PC-9 (cell line): ENCODE measurements at regions of chr6 and their contacts with region 1.

Region 1: GRCh38 chr6:151179321-151179720 is 60.4 kb upstream of the AKAP12 start:
- DNase-seq: no peak
- H3K4me3 ChIP-seq: no peak overlapping the region
- H3K27ac ChIP-seq: no peak overlapping the region
- H3K4me1 ChIP-seq: no peaks in the 10 kb centered on the region
- H3K27me3 ChIP-seq: no peaks in the 10 kb centered on the region
- CTCF ChIP-seq: no peak

Region 2: DNA sequence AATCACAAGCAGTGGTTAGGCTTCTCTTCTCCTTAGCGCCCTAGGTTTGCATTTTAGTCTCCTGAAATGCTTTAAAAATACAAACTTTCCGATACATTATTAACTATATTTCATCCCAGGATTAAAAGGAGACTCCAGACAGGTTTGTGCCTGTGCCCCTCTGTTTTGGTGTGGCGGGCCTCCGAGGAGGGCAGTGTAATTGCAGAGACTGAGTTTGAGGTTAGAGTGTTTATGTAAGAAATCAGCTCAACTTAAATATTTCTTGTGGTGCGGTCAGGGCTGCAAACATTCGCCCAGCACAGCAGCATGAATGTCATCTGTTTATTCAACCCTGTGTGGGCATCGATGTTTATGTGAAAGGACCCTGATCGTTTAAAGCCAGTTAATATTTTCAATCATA is 70.0 kb before region 1 on chr6:
- CTCF ChIA-PET with region 1: no interaction called
- POLR2A ChIA-PET with region 1: no interaction called
- intact Hi-C with region 1: no loop called
- DNase-seq: no peak
- H3K4me3 ChIP-seq: no peak overlapping the region
- H3K27ac ChIP-seq: no peak overlapping the region
- H3K4me1 ChIP-seq: no peaks in the 10 kb centered on the region
- H3K27me3 ChIP-seq: no peaks in the 10 kb centered on the region
- CTCF ChIP-seq: no peak

Region 3: DNA sequence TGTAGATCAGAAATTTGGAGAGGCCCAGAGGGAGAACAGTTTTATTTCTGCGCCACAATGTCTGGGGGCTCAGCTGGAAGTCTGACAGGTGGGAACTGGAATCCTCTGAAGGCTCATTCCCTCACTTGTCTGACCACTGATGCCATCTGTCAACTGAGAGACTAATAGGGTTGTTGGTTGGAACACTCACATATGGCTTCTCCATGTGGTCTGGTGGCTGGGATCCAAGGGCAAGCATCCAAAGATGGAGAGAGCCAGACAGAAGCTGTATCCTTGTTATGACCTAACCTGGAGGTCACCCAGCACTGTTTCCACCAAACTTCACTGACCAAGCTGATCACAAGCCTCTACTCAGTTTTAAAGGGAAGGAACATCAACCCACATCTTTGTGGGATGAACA is 57.4 kb before region 1 on chr6:
- CTCF ChIA-PET with region 1: no interaction called
- POLR2A ChIA-PET with region 1: interaction called, 10 read pairs
- intact Hi-C with region 1: no loop called
- DNase-seq: no peak
- H3K4me3 ChIP-seq: no peak overlapping the region
- H3K27ac ChIP-seq: no peak overlapping the region
- H3K4me1 ChIP-seq: peaks cover 27% of the 10 kb centered on the region
- H3K27me3 ChIP-seq: no peaks in the 10 kb centered on the region
- CTCF ChIP-seq: no peak

Region 4: GRCh38 chr6:151209071-151209831 is 29.9 kb after region 1 on chr6:
- CTCF ChIA-PET with region 1: no interaction called
- POLR2A ChIA-PET with region 1: no interaction called
- intact Hi-C with region 1: no loop called
- DNase-seq: no peak
- H3K4me3 ChIP-seq: 0 out of 2 replicates have a peak overlapping the region, but pooled peaks have one; percentile 20
- H3K27ac ChIP-seq: 0 out of 2 replicates have a peak overlapping the region, but pooled peaks have one; percentile 21
- H3K4me1 ChIP-seq: peaks cover 13% of the 10 kb centered on the region
- H3K27me3 ChIP-seq: no peaks in the 10 kb centered on the region
- CTCF ChIP-seq: no peak